Activated T-helper 2 cell treated with anti-CD3 and anti-CD28 coated beads, Interferon-gamma antibody, Interleukin-2, Interleukin-4, amounts not matched to agents 10 μg/mL and 5 μg/mL and 100 μg/mL, durations not matched to agents 14 hours and 24 hours and 36 hours (primary cell): ENCODE measurements at regions of chr12 and their contacts with region 1.

Region 1: DNA sequence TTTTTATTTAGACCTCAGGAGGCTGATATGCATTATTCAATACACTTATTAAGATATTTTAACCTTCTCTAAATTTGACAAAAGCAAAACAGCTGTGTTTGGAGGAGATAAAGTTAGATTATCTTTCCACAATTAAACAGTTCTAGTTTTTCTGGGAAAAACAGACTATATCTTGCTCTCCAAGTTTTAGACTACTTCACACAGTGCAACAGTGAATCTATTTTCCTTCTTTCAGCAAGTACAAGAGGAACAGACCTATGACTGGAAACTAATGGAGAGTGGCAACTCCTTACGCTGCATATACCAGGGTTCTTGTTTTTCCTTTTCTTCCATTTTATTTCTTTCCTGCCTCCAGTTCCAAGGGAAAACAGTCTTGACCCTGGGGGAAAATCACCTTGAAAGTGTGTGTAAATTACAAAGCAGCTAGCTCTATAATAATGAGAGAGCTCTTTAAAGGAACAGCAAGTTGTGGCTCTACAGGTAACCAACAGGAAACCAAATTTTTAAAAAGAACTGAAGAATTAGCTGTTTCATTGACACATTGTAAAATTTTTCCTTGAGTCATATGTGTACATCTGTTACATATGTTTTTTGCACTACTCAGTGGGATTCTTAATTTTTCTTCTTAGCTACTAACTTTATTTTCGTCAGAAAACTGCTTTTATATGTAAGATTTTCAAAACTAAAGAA is 27.4 kb downstream of the DNM1L start:
- DNase-seq: no peak
- H3K4me3 Mint-ChIP-seq: no peak overlapping the region
- H3K27ac Mint-ChIP-seq: peak overlapping the region; percentile 86
- H3K4me1 Mint-ChIP-seq: peaks cover 49% of the 10 kb centered on the region
- H3K27me3 Mint-ChIP-seq: no peaks in the 10 kb centered on the region

Region 2: DNA sequence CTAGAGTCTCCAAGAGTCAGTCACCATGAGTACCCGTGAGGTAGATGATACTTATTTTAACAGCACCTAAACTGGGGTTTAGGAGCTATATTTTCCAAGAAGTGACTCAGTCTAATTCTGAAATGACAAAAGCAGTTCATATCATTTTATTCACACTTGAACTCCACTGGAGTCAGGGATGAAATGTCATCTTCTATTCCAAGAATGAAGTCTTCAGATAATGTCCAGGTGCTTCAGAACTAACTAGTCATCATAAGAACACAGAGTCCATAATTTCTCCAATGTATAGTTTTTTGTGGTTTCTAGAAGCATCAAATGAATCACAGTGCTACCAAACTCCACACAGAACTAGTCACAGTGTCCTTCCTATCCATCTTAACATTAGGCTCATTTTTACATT is 14.1 kb before region 1 on chr12:
- intact Hi-C with region 1: loop called (anchors 2 kb)
- DNase-seq: no peak
- H3K4me3 Mint-ChIP-seq: no peak overlapping the region
- H3K27ac Mint-ChIP-seq: peak overlapping the region; percentile 68
- H3K4me1 Mint-ChIP-seq: peaks cover 51% of the 10 kb centered on the region
- H3K27me3 Mint-ChIP-seq: no peaks in the 10 kb centered on the region